Activated CD8-positive, alpha-beta T cell treated with anti-CD3 and anti-CD28 coated beads for 36 hours (primary cell): ENCODE measurements at regions of chr12 and their contacts with region 1.

Region 1: GRCh38 chr12:69157023-69157655 is 82.2 kb upstream of the CPSF6 start:
- DNase-seq: peak; percentile 95
- ATAC-seq: peak; percentile 93
- H3K4me3 Mint-ChIP-seq: peak overlapping the region; percentile 50
- H3K27ac Mint-ChIP-seq: peak overlapping the region; percentile 58
- H3K4me1 Mint-ChIP-seq: peaks cover 52% of the 10 kb centered on the region
- H3K27me3 Mint-ChIP-seq: peaks cover 1% of the 10 kb centered on the region
- CTCF ChIP-seq: peak; percentile 88

Region 2: DNA sequence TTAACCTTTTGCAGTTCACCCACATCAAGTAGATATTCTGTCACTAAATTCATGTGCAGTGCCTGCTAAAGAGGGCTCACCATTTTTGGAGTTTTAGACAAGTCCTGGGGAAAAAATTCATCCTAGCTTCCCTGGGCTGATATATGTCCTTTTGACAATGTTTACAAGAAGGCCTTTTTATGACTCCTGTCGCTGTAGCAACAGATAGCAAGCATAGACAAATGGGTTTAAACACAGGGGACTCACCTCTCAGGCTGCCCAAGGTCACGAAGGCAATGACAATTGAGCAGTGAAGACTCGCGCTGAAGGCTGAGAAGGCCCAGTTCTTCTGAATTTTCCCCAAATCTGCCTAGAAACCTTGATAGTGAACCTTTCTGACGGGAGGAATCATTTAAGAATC is 73.5 kb before region 1 on chr12:
- CTCF ChIA-PET with region 1: no interaction called
- POLR2A ChIA-PET with region 1: no interaction called
- intact Hi-C with region 1: no loop called
- DNase-seq: no peak
- ATAC-seq: no peak
- H3K4me3 Mint-ChIP-seq: no peak overlapping the region
- H3K27ac Mint-ChIP-seq: no peak overlapping the region
- H3K4me1 Mint-ChIP-seq: no peaks in the 10 kb centered on the region
- H3K27me3 Mint-ChIP-seq: peaks cover 5% of the 10 kb centered on the region
- CTCF ChIP-seq: no peak

Region 3: GRCh38 chr12:69240631-69240995 is 83.5 kb after region 1 on chr12:
- CTCF ChIA-PET with region 1: interaction called, 36 read pairs
- POLR2A ChIA-PET with region 1: interaction called, 5 read pairs
- intact Hi-C with region 1: no loop called
- DNase-seq: peak; percentile 60
- ATAC-seq: peak; percentile 18
- H3K4me3 Mint-ChIP-seq: peak overlapping the region; percentile 99
- H3K27ac Mint-ChIP-seq: peak overlapping the region; percentile 98
- H3K4me1 Mint-ChIP-seq: peaks cover 51% of the 10 kb centered on the region
- H3K27me3 Mint-ChIP-seq: no peaks in the 10 kb centered on the region
- CTCF ChIP-seq: no peak

Region 4: DNA sequence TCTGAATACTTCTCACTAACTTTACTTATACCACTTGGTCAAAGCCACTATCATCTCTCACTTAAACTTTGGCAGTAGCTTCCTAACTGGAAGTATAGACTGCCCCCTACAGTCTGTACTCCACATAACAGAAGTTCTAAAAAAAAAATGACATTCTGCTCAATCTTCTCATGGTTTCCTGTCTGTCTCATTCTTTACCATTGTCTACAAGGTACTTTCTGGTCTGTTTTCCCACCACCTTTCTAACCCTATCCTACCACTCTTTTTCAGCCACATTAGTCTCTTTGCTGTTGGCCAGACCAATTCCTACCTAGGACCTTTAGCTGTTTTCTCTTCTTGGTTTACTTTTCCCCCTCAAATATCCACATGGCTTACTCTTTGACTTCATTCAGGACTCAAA is 96.9 kb after region 1 on chr12:
- CTCF ChIA-PET with region 1: interaction called, 60 read pairs
- POLR2A ChIA-PET with region 1: interaction called, 3 read pairs
- intact Hi-C with region 1: loop called (anchors 5 kb)
- DNase-seq: no peak
- ATAC-seq: peak; percentile 93
- H3K4me3 Mint-ChIP-seq: no peak overlapping the region
- H3K27ac Mint-ChIP-seq: peak overlapping the region; percentile 44
- H3K4me1 Mint-ChIP-seq: peaks cover 39% of the 10 kb centered on the region
- H3K27me3 Mint-ChIP-seq: no peaks in the 10 kb centered on the region
- CTCF ChIP-seq: peak; percentile 55

Region 5: GRCh38 chr12:69330475-69331473 is 173.6 kb after region 1 on chr12:
- CTCF ChIA-PET with region 1: interaction called, 12 read pairs
- POLR2A ChIA-PET with region 1: no interaction called
- intact Hi-C with region 1: no loop called
- DNase-seq: peak; percentile 72
- ATAC-seq: peak; percentile 74
- H3K4me3 Mint-ChIP-seq: peak overlapping the region; percentile 75
- H3K27ac Mint-ChIP-seq: peak overlapping the region; percentile 87
- H3K4me1 Mint-ChIP-seq: peaks cover 42% of the 10 kb centered on the region
- H3K27me3 Mint-ChIP-seq: no peaks in the 10 kb centered on the region
- CTCF ChIP-seq: no peak